Left ventricle myocardium superior (tissue), 1 donor: ENCODE measurements at regions of chr11 and their contacts with region 1.

Region 1: GRCh38 chr11:73184953-73185671 is 33.0 kb upstream of the P2RY2 start:
- DNase-seq: peak; percentile 75
- ATAC-seq: peak; percentile 42

Region 2: DNA sequence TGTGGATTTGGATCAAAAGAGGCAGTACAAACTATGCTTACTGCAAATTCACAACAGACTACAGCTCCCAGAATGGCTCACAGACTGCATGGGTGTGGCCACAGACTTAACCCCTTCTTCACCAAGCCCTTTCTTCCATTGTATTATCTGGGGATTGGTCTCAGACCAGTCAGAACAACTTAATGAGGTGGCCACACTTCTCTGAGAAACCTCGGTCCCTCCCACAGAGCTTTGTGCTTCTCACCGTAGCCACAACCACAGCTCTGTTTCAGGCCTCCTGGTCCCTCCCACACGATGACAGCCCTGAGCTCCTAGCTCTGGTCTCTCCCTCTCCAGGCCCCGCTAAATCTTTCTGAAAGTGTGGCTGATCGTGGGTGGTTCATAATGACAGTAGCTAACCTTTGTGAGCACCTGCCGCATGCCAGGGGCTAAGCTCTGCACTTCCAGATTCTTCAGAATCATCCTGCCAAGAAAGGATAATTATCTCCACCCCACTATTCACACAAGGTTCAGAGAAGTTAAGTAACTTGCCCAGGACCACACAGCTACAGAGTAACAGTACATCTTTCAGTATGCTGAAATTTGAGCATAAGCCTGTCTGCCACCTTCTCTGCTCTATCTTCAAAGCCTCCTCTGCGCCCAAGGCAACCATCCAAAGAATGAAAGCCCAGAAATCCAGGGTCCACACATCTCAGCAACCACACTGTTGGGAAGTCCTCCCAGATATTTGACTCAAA is 516.3 kb before region 1 on chr11:
- intact Hi-C with region 1: no loop called
- DNase-seq: no peak
- ATAC-seq: no peak

Region 3: GRCh38 chr11:73218106-73218829 is 33.2 kb after region 1 on chr11 and contains the start of gene P2RY2:
- intact Hi-C with region 1: no loop called
- DNase-seq: peak; percentile 92
- ATAC-seq: peak; percentile 90
- total RNA-seq, gene P2RY2: 19.7 TPM

Region 4: DNA sequence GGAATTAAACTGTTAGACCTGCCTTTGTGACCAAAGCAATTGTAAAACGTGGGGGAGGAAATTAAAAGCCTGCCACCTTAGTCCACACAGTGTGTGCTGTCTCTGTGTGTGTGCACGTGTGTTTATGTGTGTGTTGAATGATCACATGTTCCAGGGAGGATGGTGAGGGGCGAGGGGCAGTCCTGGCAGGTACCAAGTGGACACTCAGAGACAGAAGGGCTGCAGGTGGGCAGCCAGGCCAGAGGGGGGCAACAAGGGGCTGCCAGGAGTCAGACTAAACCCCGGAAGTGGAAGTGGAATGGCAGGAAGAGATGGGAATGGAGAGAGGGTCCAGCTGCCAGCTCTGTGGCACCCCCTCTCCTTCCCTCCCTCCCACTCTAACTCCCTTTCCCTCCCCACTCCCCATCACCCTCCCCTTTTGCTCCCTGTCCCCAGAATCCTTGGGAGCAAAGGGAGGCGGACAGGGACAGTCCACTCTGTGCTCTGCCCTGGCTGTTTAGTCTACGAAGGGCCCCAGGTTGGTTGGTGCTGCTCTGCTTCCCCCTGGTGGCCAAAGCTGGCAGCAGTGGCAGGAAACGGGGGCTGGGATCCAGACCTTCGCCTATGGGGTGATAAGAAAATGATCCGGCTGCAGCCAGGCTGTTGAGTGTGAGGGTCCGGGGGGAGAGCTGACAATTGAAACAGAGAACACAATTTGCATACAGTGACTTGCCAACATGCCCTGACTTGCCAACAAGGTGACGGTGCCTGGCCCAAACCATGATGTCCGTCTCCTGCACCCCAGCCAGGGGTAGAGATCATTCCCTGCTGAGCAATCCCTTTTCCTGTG is 57.4 kb after region 1 on chr11:
- intact Hi-C with region 1: loop called (anchors 10 kb)
- DNase-seq: peak; percentile 85
- ATAC-seq: peak; percentile 50